HepG2 (cell line): ENCODE measurements at regions of chr4 and their contacts with region 1.

Region 1: GRCh38 chr4:6308899-6309643 is 39.4 kb downstream of the WFS1 start:
- DNase-seq: peak; percentile 79
- ATAC-seq: peak; percentile 91
- H3K4me3 ChIP-seq: peak overlapping the region; percentile 71 to 74 (median 74)
- H3K27ac ChIP-seq: peak overlapping the region; percentile 65
- H3K4me1 ChIP-seq: peaks cover 43% of the 10 kb centered on the region
- H3K27me3 ChIP-seq: no peaks in the 10 kb centered on the region
- CTCF ChIP-seq: peak; percentile 84
- EP300 ChIP-seq: no peak
- POLR2A ChIP-seq: peak in 1 of 2 experiments; percentile 61; a peak in 2 of 4 replicates
- RAD21 ChIP-seq: peak; percentile 93

Region 2: GRCh38 chr4:6269616-6270511 is 39.2 kb before region 1 on chr4 and contains the start of gene WFS1:
- CTCF ChIA-PET with region 1: no interaction called
- POLR2A ChIA-PET with region 1: interaction called, 41 read pairs
- in situ Hi-C with region 1: no loop called
- intact Hi-C with region 1: no loop called
- DNase-seq: peak; percentile 94
- ATAC-seq: peak; percentile 97
- H3K4me3 ChIP-seq: peak within 1 kb of the TSS; percentile 87 to 99 (median 92)
- H3K27ac ChIP-seq: peak within 1 kb of the TSS; percentile 80
- H3K4me1 ChIP-seq: peaks cover 77% of the 10 kb centered on the region
- H3K27me3 ChIP-seq: no peaks in the 10 kb centered on the region
- CTCF ChIP-seq: no peak
- EP300 ChIP-seq: no peak
- POLR2A ChIP-seq: peak in 1 of 2 experiments; percentile 84; a peak in 2 of 4 replicates
- RAD21 ChIP-seq: no peak
- total RNA-seq, gene WFS1: 19.8 and 39.1 TPM in 2 replicates

Region 3: GRCh38 chr4:6278801-6279197 is 30.3 kb before region 1 on chr4:
- CTCF ChIA-PET with region 1: no interaction called
- POLR2A ChIA-PET with region 1: interaction called, 41 read pairs
- in situ Hi-C with region 1: no loop called
- intact Hi-C with region 1: no loop called
- DNase-seq: peak; percentile 73
- ATAC-seq: peak; percentile 52
- H3K4me3 ChIP-seq: peak overlapping the region in 1 of 3 experiments; percentile 37; a peak in 1 of 6 replicates
- H3K27ac ChIP-seq: peak overlapping the region; percentile 92
- H3K4me1 ChIP-seq: peaks cover 61% of the 10 kb centered on the region
- H3K27me3 ChIP-seq: no peaks in the 10 kb centered on the region
- CTCF ChIP-seq: no peak
- EP300 ChIP-seq: peak in 1 of 2 experiments; percentile 61; a peak in 2 of 4 replicates
- POLR2A ChIP-seq: no peak
- RAD21 ChIP-seq: no peak

Region 4: DNA sequence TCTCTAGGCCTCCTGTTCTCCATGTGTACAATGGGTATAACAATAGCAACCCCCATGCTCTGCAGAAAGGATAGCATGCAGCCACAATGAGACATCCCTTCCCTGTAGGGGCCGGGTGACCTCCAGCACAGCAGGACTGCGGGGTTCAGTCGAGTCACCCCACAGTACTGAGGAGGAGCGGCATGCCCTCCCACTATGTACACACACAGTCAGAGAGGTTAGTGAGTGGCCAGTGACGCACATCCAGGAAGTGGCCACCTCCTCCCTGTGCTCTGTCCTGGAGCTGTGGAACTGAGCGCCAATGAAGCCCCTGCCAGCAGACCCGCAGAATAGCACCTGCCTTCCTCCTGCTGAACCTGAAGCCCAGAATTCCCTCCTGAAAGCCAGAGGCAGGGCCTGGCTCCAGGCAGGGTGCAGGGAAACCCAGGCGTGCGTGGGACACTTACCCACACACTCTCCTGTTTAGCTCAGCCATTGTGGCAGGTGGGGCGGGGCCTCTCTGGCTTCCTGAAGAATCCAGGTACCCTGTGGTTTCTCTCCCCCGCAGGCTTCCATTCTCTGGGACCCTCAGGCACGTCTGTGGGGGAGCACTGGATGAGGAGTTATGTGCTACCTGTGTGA is 10.6 kb after region 1 on chr4:
- CTCF ChIA-PET with region 1: no interaction called
- POLR2A ChIA-PET with region 1: interaction called, 31 read pairs
- in situ Hi-C with region 1: no loop called
- intact Hi-C with region 1: no loop called
- DNase-seq: no peak
- ATAC-seq: no peak
- H3K4me3 ChIP-seq: no peak overlapping the region
- H3K27ac ChIP-seq: no peak overlapping the region
- H3K4me1 ChIP-seq: peaks cover 72% of the 10 kb centered on the region
- H3K27me3 ChIP-seq: no peaks in the 10 kb centered on the region
- CTCF ChIP-seq: no peak
- EP300 ChIP-seq: no peak
- POLR2A ChIP-seq: no peak
- RAD21 ChIP-seq: no peak